ENCODE measurements at regions of chr15 and their contacts with region 1.

Region 1: GRCh38 chr15:34437687-34438086 is at the start of gene GOLGA8A:
- DNase-seq: peak; percentile 55
- H3K4me3 ChIP-seq: peak within 1 kb of the TSS; percentile 51 to 60
- H3K27ac ChIP-seq: peak within 1 kb of the TSS in 1 of 2 donors; percentile 42
- H3K4me1 ChIP-seq: no peaks in the 10 kb centered on the region
- H3K27me3 ChIP-seq: no peaks in the 10 kb centered on the region
- CTCF ChIP-seq: no peak
- POLR2A ChIP-seq: no peak
- total RNA-seq, gene GOLGA8A: 24.5 to 63.7 TPM

Region 2: GRCh38 chr15:34337557-34338306 is 100.0 kb before region 1 on chr15 and contains the start of gene SLC12A6:
- intact Hi-C with region 1: loop called (anchors 5 kb)
- DNase-seq: peak; percentile 82
- H3K4me3 ChIP-seq: peak within 1 kb of the TSS; percentile 75 to 90
- H3K27ac ChIP-seq: peak within 1 kb of the TSS; percentile 79 to 84
- H3K4me1 ChIP-seq: peaks cover 5% of the 10 kb centered on the region
- H3K27me3 ChIP-seq: no peaks in the 10 kb centered on the region
- CTCF ChIP-seq: peak in 2 of 4 experiments; percentile 12 to 35
- POLR2A ChIP-seq: peak; percentile 78
- total RNA-seq, gene SLC12A6: 10.2 to 36.8 TPM

Measured in prostate gland (tissue), 2 donors.